Endothelial cell of umbilical vein (primary cell): ENCODE measurements at regions of chr3 and their contacts with region 1.

Region 1: DNA sequence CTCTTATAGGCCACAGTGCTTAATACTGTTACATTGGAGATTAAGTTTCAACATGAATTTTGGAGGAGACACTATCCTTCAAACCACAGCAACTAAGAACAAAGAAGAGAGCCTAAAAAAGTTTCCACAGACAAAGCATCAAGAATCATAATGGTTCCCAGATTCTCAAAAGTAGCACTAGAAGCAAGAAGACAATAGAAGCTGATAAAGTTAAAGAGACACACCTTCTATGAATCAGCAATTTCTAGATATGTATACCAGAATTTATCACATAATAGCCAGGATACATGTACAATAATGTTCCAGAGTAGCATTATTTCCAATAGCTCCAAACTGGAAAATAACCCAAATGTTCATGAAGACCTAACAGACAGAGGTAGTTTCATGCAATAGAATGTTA is 12.2 kb downstream of the NKIRAS1 start:
- DNase-seq: no peak
- H3K4me3 ChIP-seq: no peak overlapping the region
- H3K27ac ChIP-seq: no peak overlapping the region
- H3K4me1 ChIP-seq: no peaks in the 10 kb centered on the region
- H3K27me3 ChIP-seq: no peaks in the 10 kb centered on the region
- CTCF ChIP-seq: no peak
- POLR2A ChIP-seq: no peak

Region 2: GRCh38 chr3:23964537-23965235 is 60.1 kb after region 1 on chr3:
- CTCF ChIA-PET with region 1: no interaction called
- POLR2A ChIA-PET with region 1: interaction called, 10 read pairs
- dilution Hi-C with region 1: no loop called
- intact Hi-C with region 1: no loop called
- DNase-seq: no peak
- H3K4me3 ChIP-seq: no peak overlapping the region
- H3K27ac ChIP-seq: no peak overlapping the region
- H3K4me1 ChIP-seq: peaks cover 10% of the 10 kb centered on the region
- H3K27me3 ChIP-seq: no peaks in the 10 kb centered on the region
- CTCF ChIP-seq: no peak
- POLR2A ChIP-seq: no peak